Calu3 (cell line): ENCODE measurements at regions of chr16 and their contacts with region 1.

Region 1: GRCh38 chr16:24834459-24835335 is 11.1 kb upstream of the SLC5A11 start:
- DNase-seq: peak; percentile 67
- H3K4me3 Mint-ChIP-seq: no peak overlapping the region
- H3K27ac Mint-ChIP-seq: no peak overlapping the region
- H3K4me1 Mint-ChIP-seq: peaks cover 13% of the 10 kb centered on the region
- H3K27me3 Mint-ChIP-seq: no peaks in the 10 kb centered on the region
- CTCF ChIP-seq: peak; percentile 70

Region 2: DNA sequence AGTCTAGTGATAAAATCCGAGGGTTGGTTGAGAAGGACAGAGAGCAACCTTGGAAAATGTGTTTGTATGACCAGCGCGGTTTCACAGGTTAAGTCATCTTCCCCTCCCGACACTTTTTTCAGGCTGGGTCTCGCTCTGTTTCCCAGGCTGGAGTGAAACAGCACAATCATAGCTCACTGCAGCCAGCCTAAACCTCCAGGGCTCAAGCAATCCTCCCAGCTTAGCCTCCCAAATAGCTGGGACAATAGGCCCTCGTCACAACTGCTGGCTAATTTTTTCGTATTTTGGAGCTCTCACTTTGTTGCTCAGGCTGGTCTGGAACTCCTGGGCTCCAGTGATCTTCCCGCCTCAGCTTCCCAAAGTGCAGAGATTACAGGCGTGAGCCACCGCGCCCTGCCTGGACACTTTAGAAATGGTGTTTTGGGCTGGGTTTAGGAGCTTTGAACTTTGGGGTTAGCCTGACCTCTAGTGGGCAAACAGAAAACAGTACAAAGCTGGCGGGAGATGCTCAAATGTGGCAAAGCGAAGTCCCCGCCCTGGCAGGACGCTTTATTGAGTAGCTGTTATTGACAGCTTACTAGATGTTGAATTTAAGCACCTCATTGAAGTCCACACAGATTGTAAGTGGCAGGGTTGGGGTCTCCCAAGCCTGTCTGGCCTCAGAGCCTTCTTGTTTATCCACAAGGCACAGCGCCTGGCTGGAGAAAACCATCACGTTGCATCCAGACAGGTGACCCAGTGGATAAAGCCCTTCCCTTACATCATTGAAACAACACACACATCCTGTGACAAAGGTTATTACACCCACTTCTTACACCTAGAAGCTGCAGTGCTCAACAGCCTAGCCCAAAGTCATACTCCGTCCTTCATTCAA is 330.0 kb before region 1 on chr16:
- CTCF ChIA-PET with region 1: no interaction called
- intact Hi-C with region 1: no loop called
- DNase-seq: peak; percentile 71
- H3K4me3 Mint-ChIP-seq: no peak overlapping the region
- H3K27ac Mint-ChIP-seq: no peak overlapping the region
- H3K4me1 Mint-ChIP-seq: no peaks in the 10 kb centered on the region
- H3K27me3 Mint-ChIP-seq: peaks cover 68% of the 10 kb centered on the region
- CTCF ChIP-seq: peak; percentile 89

Region 3: DNA sequence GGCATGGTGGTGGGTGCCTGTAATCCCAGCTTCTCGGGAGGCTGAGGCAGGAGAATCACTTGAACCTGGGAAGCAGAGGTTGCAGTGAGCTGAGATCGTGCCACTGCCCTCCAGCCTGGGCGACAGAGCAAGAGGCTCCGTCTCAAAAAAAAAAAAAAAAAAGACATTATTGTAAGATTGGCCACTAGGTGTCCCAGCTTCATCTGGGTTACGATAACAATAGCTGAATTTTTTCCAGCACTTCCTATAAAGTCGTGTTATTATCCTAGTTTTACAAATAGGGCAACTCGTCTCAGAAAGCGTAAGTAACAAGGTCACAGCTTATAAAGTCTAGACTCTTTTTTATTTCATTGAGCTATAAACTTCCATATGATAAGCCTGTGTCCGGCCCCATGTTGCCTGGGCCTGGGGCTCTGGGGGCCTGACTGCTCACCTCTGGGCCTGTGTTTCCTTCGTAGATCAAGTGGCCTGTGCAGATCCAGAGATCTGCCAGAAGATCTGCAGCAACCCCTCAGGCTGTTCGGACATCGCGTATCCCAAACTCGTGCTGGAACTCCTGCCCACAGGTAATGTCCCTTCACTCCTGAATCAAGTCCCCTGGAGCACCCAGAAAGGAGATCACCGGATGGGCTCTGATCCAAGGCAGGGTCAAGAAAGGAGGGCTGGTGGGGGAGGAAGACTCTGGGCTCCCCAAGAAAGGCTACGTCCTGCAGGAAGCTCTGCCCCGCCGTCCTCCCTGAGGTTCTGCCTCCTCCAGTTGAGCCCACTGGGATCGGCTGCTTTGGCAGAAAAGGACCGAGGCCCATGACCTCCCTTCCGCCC is 71.7 kb after region 1 on chr16:
- CTCF ChIA-PET with region 1: interaction called, 14 read pairs
- intact Hi-C with region 1: loop called (anchors 5 kb)
- DNase-seq: no peak
- H3K4me3 Mint-ChIP-seq: no peak overlapping the region
- H3K27ac Mint-ChIP-seq: no peak overlapping the region
- H3K4me1 Mint-ChIP-seq: no peaks in the 10 kb centered on the region
- H3K27me3 Mint-ChIP-seq: no peaks in the 10 kb centered on the region
- CTCF ChIP-seq: peak; percentile 33

Region 4: GRCh38 chr16:24921229-24921628 is 86.5 kb after region 1 on chr16:
- CTCF ChIA-PET with region 1: no interaction called
- intact Hi-C with region 1: no loop called
- DNase-seq: no peak
- H3K4me3 Mint-ChIP-seq: no peak overlapping the region
- H3K27ac Mint-ChIP-seq: no peak overlapping the region
- H3K4me1 Mint-ChIP-seq: no peaks in the 10 kb centered on the region
- H3K27me3 Mint-ChIP-seq: no peaks in the 10 kb centered on the region
- CTCF ChIP-seq: no peak

Region 5: DNA sequence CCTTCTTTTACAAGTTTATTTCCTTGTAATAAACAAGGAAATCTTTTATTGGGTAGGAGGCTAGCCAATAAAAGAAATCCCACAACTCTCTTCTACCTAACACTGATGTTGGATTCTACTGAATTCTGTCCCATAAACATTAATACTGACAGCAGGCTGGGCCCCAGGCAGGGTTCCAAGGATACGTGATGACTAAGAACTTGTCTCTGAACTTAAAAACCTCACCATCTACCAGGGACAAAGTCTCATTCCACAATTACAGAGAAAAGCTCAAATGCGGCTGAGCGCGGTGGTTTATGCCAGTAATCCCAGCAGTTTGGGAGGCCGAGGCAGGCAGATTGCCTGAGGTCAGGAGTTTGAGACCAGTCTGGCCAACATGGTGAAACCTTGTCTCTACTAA is 115.6 kb after region 1 on chr16:
- CTCF ChIA-PET with region 1: no interaction called
- intact Hi-C with region 1: no loop called
- DNase-seq: no peak
- H3K4me3 Mint-ChIP-seq: no peak overlapping the region
- H3K27ac Mint-ChIP-seq: no peak overlapping the region
- H3K4me1 Mint-ChIP-seq: no peaks in the 10 kb centered on the region
- H3K27me3 Mint-ChIP-seq: no peaks in the 10 kb centered on the region
- CTCF ChIP-seq: no peak